ENCODE measurements at regions of chr4 and their contacts with region 1.

Region 1: GRCh38 chr4:70687821-70688794 is at the start of gene UTP3:
- DNase-seq: peak; percentile 72 to 97
- H3K4me3 ChIP-seq: peak within 1 kb of the TSS; percentile 86 to 88
- H3K27ac ChIP-seq: peak within 1 kb of the TSS; percentile 81 to 98
- H3K4me1 ChIP-seq: peaks cover 0 to 23% of the 10 kb centered on the region in 2 donors
- H3K27me3 ChIP-seq: no peaks in the 10 kb centered on the region
- CTCF ChIP-seq: peak; percentile 86 to 92 (median 90)
- total RNA-seq, gene UTP3: 3.2 TPM

Region 2: GRCh38 chr4:70651864-70652506 is 36.1 kb before region 1 on chr4:
- intact Hi-C with region 1: loop called (anchors 1 kb)
- DNase-seq: no peak
- H3K4me3 ChIP-seq: no peak overlapping the region
- H3K27ac ChIP-seq: no peak overlapping the region
- H3K4me1 ChIP-seq: no peaks in the 10 kb centered on the region
- H3K27me3 ChIP-seq: no peaks in the 10 kb centered on the region
- CTCF ChIP-seq: peak in 2 of 3 experiments; percentile 37 to 57

Region 3: DNA sequence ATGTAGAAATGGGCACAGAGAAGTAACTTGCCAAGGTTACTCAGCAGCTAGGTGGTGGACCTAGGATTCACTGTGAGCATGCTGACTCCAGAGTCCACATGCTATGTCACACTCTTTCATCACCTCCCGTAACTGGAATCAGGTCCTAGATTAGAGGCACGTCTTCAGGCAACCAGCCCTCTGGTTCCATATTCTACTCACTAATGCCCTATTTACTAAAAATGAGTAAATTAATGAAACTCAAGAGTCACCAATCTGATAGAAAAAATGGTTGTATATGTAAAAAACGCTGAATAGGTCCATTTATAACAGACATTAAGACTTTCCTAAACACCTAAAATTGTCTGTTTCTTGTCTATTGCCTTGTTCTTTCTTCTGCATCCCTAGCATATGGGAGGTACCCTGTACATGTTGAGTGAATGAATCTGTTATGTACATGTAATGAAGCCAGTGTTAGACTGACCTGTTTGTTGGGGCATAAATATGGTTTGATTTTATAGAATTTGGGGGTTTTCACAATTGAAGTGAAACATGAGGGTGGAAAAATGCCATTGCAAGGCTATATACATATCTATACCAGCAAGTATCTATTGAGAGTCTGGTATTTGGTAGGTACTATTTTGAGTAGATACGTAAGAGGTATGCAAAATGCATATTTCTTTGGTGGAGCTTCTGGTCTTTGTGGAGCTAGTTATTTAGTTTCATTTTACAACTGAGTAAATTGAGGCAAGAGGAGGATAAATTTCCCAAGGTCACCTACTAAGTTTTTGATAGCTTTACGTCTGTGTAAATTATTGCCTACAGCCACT is 26.2 kb after region 1 on chr4:
- intact Hi-C with region 1: no loop called
- DNase-seq: no peak
- H3K4me3 ChIP-seq: no peak overlapping the region
- H3K27ac ChIP-seq: no peak overlapping the region
- H3K4me1 ChIP-seq: no peaks in the 10 kb centered on the region
- H3K27me3 ChIP-seq: no peaks in the 10 kb centered on the region
- CTCF ChIP-seq: no peak

Region 4: GRCh38 chr4:70839589-70840093 is 151.5 kb after region 1 on chr4 and contains the start of gene GRSF1:
- intact Hi-C with region 1: loop called (anchors 1 kb)
- DNase-seq: peak; percentile 71 to 95
- H3K4me3 ChIP-seq: peak within 1 kb of the TSS; percentile 76 to 88
- H3K27ac ChIP-seq: peak within 1 kb of the TSS; percentile 88 to 95
- H3K4me1 ChIP-seq: peaks cover 5 to 13% of the 10 kb centered on the region in 2 donors
- H3K27me3 ChIP-seq: no peaks in the 10 kb centered on the region
- CTCF ChIP-seq: no peak
- total RNA-seq, gene GRSF1: 23.3 TPM

Region 5: DNA sequence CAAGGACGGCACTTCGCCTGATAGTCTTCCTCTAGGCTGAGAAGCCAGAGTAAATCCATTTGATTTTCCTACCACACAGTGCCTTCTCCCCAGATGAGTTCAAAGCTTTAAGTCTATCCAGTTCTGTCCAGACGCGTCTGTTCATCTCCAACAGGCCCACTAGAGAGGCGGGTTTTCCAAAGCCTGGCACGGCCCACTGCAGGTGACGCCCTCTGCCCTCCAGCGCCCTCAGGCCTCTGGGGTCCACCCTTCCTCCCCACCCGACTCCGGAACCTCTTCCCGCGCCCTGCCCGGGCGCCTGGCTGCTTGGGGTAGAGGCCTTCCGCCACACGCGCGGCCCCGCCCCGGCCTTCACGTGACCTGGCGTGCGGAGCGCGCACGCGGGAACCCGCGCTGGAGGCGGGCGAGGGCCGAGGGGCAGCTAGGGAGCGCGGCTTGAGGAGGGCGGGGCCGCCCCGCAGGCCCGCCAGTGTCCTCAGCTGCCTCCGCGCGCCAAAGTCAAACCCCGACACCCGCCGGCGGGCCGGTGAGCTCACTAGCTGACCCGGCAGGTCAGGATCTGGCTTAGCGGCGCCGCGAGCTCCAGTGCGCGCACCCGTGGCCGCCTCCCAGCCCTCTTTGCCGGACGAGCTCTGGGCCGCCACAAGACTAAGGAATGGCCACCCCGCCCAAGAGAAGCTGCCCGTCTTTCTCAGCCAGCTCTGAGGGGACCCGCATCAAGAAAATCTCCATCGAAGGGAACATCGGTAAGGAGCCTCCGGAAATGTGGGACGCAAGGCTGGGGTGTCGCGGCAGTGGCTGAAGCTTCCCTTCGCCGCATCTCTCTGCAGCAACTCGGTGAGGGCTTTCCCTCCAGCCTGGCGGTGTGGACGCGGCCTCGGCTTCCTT is 305.3 kb after region 1 on chr4 and contains the start of gene DCK:
- intact Hi-C with region 1: loop called (anchors 2 kb)
- DNase-seq: peak; percentile 61 to 95
- H3K4me3 ChIP-seq: peak within 1 kb of the TSS; percentile 73 to 75
- H3K27ac ChIP-seq: peak within 1 kb of the TSS; percentile 76 to 86
- H3K4me1 ChIP-seq: peaks cover 6% of the 10 kb centered on the region in 2 donors
- H3K27me3 ChIP-seq: no peaks in the 10 kb centered on the region
- CTCF ChIP-seq: no peak
- total RNA-seq, gene DCK: 24.5 TPM

Region 6: GRCh38 chr4:71113294-71113693 is 425.2 kb after region 1 on chr4:
- intact Hi-C with region 1: no loop called
- DNase-seq: no peak
- H3K4me3 ChIP-seq: no peak overlapping the region
- H3K27ac ChIP-seq: no peak overlapping the region
- H3K4me1 ChIP-seq: no peaks in the 10 kb centered on the region
- H3K27me3 ChIP-seq: no peaks in the 10 kb centered on the region
- CTCF ChIP-seq: no peak

Measured in ascending aorta (tissue), 2 donors.